Cardiac septum (tissue), 1 donor: ENCODE measurements at regions of chr5 and their contacts with region 1.

Region 1: GRCh38 chr5:66814146-66814991 is 218.2 kb downstream of the MAST4 start:
- DNase-seq: no peak

Region 2: DNA sequence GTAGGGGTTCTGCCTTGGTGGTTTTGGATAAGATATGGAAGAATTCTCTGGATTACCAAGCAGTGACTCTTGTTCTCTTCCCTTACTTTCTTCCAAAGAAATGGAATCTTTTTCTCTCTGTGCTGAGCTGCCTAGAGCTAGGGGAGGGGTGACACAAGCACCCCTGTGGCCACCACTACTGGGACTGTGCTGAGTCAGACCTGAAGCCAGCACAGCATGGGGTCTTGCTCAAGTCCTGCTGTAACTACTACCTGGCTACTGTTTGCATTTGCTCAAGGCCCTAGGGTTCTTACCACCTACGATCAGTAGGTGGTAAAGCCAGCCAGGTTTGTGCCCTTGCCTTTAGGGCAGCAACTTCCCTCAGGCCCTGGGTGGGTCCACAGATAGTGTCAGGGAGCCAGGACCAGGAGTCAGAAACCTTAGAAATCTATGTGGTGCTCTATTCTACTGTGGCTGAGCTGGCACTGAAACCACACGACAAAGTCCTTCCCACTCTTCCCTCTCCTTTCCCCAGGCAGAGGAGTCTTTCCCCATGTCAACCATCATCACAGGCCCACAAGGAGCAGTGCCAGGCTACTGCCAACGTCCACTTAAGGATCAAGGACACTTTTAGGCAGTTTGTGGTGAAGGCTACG is 616.5 kb before region 1 on chr5:
- intact Hi-C with region 1: no loop called
- DNase-seq: no peak

Region 3: GRCh38 chr5:66863243-66864170 is 49.1 kb after region 1 on chr5:
- intact Hi-C with region 1: loop called (anchors 2 kb)
- DNase-seq: no peak

Region 4: GRCh38 chr5:67149951-67150523 is 335.7 kb after region 1 on chr5:
- intact Hi-C with region 1: loop called (anchors 5 kb)
- DNase-seq: no peak

Region 5: DNA sequence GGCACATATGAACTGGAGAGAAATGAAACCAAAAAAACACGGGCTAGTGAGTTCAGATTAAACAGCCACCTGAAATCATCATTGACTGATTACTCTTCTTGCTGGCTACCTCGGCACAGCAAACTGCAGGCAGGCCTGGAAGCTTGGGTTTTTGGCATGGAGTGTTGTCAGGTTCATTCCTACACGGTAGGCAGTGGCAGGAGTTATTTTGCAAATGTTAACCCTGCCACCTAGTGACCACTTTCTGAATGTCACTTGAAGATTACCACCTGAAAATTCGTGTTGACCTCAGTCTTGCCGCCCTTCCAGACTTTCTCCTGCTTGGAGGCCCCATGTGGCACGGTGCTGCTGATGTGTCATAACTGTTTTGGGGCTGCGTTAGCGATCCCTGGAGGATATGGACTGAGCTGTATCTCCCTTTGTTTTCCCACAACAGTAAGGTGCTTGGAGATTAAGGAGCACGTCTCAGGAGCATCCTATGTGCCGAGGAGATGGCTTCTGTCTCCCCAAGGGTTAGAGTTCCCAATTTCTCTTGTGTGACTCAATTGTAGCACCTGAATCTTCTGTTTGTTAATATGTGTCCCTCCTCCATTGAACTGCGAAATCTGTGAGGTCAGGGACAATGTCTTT is 394.9 kb after region 1 on chr5:
- intact Hi-C with region 1: loop called (anchors 5 kb)
- DNase-seq: no peak